HepG2 (cell line): ENCODE measurements at regions of chr15 and their contacts with region 1.

Region 1: GRCh38 chr15:92917606-92918407 is 17.7 kb downstream of the CHD2 start:
- DNase-seq: peak; percentile 87
- ATAC-seq: peak; percentile 39
- H3K4me3 ChIP-seq: no peak overlapping the region
- H3K27ac ChIP-seq: peak overlapping the region; percentile 60
- H3K4me1 ChIP-seq: peaks cover 98% of the 10 kb centered on the region
- H3K27me3 ChIP-seq: no peaks in the 10 kb centered on the region
- CTCF ChIP-seq: peak; percentile 84
- EP300 ChIP-seq: no peak
- POLR2A ChIP-seq: no peak
- RAD21 ChIP-seq: peak; percentile 81

Region 2: DNA sequence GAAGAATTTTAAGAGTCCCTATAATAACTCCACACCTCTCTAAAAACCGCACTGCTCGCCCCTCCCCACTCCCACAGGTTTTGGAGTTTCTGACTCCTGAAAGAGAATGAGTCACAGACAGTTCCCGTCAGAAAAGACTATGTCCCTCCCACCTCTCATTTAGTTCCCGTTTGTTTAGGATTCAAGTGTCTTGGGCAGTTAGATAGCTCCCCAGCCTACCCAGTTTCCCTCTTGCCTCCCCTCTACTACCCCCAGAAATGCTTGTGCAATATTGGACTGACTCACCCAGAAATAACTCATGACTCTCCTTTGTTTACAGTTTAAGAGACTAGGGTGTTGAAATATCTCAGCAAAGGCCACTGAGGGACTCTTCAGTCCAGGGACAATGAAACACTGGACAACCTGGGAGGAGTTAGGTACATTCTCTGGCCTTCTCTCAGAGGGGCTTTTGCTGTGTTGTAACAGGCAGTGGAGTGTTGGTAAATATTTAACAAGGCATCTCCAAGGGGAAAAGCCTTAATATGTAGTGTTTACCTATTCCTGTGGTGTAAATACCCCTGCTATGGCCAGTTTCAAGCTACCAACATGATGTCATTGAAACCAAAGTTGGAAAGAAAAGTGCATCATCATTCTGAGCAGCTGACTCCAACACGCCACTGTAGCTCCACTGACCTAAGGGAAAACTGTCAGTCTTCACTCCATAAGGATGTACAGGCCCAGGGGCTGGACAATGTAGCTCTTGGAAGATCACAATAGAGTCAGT is 113.8 kb before region 1 on chr15:
- CTCF ChIA-PET with region 1: interaction called, 6 read pairs
- POLR2A ChIA-PET with region 1: interaction called, 62 read pairs
- in situ Hi-C with region 1: no loop called
- intact Hi-C with region 1: no loop called
- DNase-seq: peak; percentile 100
- ATAC-seq: peak; percentile 90
- H3K4me3 ChIP-seq: peak overlapping the region in 1 of 3 experiments; percentile 18; a peak in 2 of 6 replicates
- H3K27ac ChIP-seq: peak overlapping the region; percentile 90
- H3K4me1 ChIP-seq: peaks cover 63% of the 10 kb centered on the region
- H3K27me3 ChIP-seq: no peaks in the 10 kb centered on the region; a peak in 1 of 5 replicates
- CTCF ChIP-seq: no peak
- EP300 ChIP-seq: peak; percentile 94 to 97
- POLR2A ChIP-seq: peak; percentile 27 to 48; a peak in 2 of 4 replicates
- RAD21 ChIP-seq: no peak

Region 3: GRCh38 chr15:93121973-93122910 is 204.4 kb after region 1 on chr15:
- CTCF ChIA-PET with region 1: no interaction called
- POLR2A ChIA-PET with region 1: no interaction called
- in situ Hi-C with region 1: no loop called
- intact Hi-C with region 1: no loop called
- DNase-seq: no peak
- ATAC-seq: no peak
- H3K4me3 ChIP-seq: no peak overlapping the region
- H3K27ac ChIP-seq: no peak overlapping the region
- H3K4me1 ChIP-seq: no peaks in the 10 kb centered on the region
- H3K27me3 ChIP-seq: peaks cover 1 to 20% of the 10 kb centered on the region in 2 experiments; a peak in 4 of 5 replicates
- CTCF ChIP-seq: no peak
- EP300 ChIP-seq: no peak
- POLR2A ChIP-seq: no peak
- RAD21 ChIP-seq: no peak

Region 4: DNA sequence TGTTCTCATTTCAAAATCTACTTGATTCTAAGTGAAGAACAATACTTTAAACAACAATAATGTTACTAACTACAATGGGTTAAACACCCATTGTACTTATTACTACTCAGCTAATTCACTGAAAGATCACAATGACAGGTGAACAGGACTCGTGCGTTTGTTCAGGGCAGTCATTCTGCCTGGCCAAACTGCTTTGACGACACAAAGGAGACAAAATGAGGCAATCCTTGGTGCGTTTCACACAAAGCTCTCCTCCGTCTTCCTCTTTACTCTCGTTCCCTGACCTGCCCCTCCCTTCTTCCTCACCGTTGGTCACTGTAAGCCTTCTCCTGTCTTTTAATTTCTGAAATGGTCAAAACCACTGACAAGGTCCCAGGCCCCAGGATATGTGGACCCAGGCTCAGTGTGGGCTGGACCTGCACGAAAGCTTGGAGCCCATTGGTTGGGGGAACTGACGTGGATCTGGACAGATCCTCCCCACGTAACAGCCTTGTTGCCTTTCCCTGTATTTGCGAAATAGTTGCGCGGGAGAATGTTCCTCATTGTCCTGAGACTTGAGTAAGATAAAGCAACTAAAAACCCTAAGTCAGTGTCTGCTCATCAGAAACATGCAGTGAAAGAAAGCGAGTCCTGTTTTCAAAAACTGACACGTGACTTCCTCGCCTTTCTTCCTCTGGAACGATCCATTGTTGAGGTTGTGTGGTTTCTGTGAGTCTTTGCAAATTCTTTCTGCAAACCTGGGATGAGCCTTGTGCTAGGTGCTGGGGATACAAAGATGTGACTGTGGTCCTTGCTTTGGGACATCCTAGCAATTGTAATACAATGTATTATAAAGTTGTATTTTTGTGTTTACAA is 318.3 kb after region 1 on chr15:
- CTCF ChIA-PET with region 1: no interaction called
- POLR2A ChIA-PET with region 1: no interaction called
- in situ Hi-C with region 1: no loop called
- intact Hi-C with region 1: no loop called
- DNase-seq: no peak
- ATAC-seq: no peak
- H3K4me3 ChIP-seq: no peak overlapping the region
- H3K27ac ChIP-seq: no peak overlapping the region
- H3K4me1 ChIP-seq: no peaks in the 10 kb centered on the region
- H3K27me3 ChIP-seq: peaks cover 0 to 7% of the 10 kb centered on the region in 2 experiments; a peak in 2 of 5 replicates
- CTCF ChIP-seq: no peak
- EP300 ChIP-seq: no peak
- POLR2A ChIP-seq: no peak
- RAD21 ChIP-seq: no peak